Activated B cell treated with CpG ODN at 0.5 μM for 24 hours (primary cell): ENCODE measurements at regions of chr15 and their contacts with region 1.

Region 1: GRCh38 chr15:35519541-35520149 is 26.3 kb downstream of the DPH6 start:
- DNase-seq: no peak
- ATAC-seq: peak; percentile 21
- H3K4me3 Mint-ChIP-seq: no peak overlapping the region
- H3K27ac Mint-ChIP-seq: no peak overlapping the region
- H3K4me1 Mint-ChIP-seq: no peaks in the 10 kb centered on the region
- H3K27me3 Mint-ChIP-seq: no peaks in the 10 kb centered on the region
- CTCF ChIP-seq: no peak

Region 2: GRCh38 chr15:35751413-35752133 is 231.9 kb after region 1 on chr15:
- CTCF ChIA-PET with region 1: interaction called, 3 read pairs
- POLR2A ChIA-PET with region 1: no interaction called
- intact Hi-C with region 1: loop called (anchors 5 kb)
- DNase-seq: no peak
- ATAC-seq: no peak
- H3K4me3 Mint-ChIP-seq: no peak overlapping the region
- H3K27ac Mint-ChIP-seq: no peak overlapping the region
- H3K4me1 Mint-ChIP-seq: no peaks in the 10 kb centered on the region
- H3K27me3 Mint-ChIP-seq: peaks cover 5% of the 10 kb centered on the region
- CTCF ChIP-seq: no peak

Region 3: DNA sequence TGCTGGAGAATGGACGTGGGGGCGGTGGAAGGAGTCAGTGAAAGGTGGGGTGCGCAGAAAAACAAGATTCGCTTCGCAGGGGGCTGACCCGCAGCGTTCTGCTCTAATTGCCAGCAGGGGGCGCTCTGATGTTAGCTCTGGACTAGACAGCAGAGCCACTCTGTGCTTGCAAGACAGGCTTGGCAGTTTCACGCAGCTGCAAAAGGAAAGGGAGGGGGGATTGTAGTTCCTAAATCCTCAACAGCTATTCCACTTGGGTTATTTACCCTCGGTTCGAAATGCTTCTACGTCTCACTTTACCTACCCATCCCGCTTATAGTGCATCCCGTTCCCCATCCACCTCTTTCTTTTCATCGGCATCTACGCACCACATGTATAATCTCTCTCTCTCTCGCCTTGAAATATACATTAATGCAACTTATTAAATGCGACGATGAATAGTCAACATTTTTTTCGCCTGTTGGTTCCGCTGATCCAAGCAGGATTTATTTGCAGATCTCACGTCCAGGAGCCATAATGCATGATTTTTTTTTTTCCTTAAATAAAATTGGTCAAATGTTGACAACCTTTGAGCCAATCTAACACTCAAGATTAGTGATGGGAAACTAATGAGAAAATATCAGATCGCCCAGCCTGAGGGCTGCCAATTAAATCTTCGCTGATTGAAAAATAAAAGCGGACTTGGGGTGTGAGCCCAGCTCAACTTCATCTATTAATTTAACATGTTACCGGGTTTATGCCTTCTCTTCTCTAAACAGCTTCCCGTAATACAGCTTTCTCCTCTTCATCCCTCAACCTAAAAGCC is 1364.3 kb after region 1 on chr15:
- CTCF ChIA-PET with region 1: no interaction called
- POLR2A ChIA-PET with region 1: no interaction called
- intact Hi-C with region 1: loop called (anchors 10 kb)
- DNase-seq: peak; percentile 23
- ATAC-seq: no peak
- H3K4me3 Mint-ChIP-seq: no peak overlapping the region
- H3K27ac Mint-ChIP-seq: no peak overlapping the region
- H3K4me1 Mint-ChIP-seq: peaks cover 4% of the 10 kb centered on the region
- H3K27me3 Mint-ChIP-seq: peaks cover 85% of the 10 kb centered on the region
- CTCF ChIP-seq: no peak

Region 4: GRCh38 chr15:37106490-37107001 is 1586.9 kb after region 1 on chr15:
- CTCF ChIA-PET with region 1: no interaction called
- POLR2A ChIA-PET with region 1: no interaction called
- intact Hi-C with region 1: loop called (anchors 1 kb)
- DNase-seq: no peak
- ATAC-seq: no peak
- H3K4me3 Mint-ChIP-seq: no peak overlapping the region
- H3K27ac Mint-ChIP-seq: no peak overlapping the region
- H3K4me1 Mint-ChIP-seq: peaks cover 26% of the 10 kb centered on the region
- H3K27me3 Mint-ChIP-seq: peaks cover 83% of the 10 kb centered on the region
- CTCF ChIP-seq: no peak

Region 5: DNA sequence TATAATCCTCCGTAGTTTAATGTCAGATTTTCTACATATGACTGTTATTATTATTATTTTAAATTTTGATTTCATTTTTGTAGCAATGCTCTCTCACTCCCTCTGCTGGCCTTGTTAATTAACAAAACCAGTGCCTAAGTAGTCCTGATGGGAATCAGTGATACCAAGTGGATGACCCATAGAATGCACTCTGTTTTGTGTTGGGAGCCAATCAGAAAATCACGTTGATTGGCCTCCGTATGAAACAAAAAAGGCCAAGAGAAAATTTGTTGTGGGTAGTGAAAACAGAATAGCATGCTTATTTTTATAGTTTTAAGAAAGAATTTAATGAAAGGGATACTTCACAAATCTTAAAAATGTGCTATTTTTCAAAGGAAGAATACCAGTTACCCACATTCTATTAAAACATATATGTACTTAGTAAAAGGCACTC is 1615.1 kb after region 1 on chr15:
- CTCF ChIA-PET with region 1: interaction called, 6 read pairs
- POLR2A ChIA-PET with region 1: no interaction called
- intact Hi-C with region 1: loop called (anchors 1 kb)
- DNase-seq: no peak
- ATAC-seq: no peak
- H3K4me3 Mint-ChIP-seq: no peak overlapping the region
- H3K27ac Mint-ChIP-seq: no peak overlapping the region
- H3K4me1 Mint-ChIP-seq: no peaks in the 10 kb centered on the region
- H3K27me3 Mint-ChIP-seq: peaks cover 9% of the 10 kb centered on the region
- CTCF ChIP-seq: peak; percentile 69